ENCODE measurements at regions of chr3 and their contacts with region 1.

Region 1: DNA sequence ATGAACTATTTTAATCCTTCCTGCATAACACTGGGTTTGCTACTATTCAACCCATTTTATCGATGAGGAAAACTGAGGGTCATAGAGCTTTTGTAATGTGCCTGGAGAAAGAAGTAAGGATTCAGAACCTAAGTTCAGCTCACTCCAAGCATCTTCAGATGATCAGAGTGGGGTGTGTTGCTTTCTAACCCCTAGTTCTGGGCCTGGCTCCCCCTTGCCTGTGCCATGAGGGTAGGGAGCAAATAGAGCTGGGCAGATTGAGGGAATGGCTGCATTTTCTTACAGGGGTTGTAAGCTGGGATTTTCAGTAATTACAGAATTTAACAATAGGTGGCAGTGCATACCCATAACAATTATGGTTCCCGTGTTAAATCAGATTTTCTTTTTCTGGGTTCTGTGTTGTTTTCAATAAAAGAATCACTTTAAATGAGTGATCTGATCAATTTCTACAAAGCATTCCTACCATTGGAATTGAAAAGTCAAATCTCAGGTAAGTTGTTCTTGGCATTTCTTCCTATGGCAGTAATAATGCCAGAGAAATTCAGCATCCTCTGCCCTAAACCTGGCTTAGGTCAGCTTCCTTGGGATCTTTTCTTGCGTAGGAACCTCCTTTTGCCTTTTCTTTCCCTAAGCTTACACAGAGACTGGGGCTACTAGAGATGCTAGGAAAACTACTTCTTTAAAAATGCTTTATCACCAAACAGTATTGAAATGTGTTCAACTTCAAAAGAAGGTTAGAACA is 103.8 kb upstream of the IL12A start:
- DNase-seq: no peak
- H3K4me3 ChIP-seq: no peak overlapping the region
- CTCF ChIP-seq: peak; percentile 31

Region 2: GRCh38 chr3:159739886-159740453 is 144.9 kb before region 1 on chr3:
- CTCF ChIA-PET with region 1: no interaction called
- POLR2A ChIA-PET with region 1: no interaction called
- DNase-seq: no peak
- H3K4me3 ChIP-seq: no peak overlapping the region
- CTCF ChIP-seq: no peak

Region 3: DNA sequence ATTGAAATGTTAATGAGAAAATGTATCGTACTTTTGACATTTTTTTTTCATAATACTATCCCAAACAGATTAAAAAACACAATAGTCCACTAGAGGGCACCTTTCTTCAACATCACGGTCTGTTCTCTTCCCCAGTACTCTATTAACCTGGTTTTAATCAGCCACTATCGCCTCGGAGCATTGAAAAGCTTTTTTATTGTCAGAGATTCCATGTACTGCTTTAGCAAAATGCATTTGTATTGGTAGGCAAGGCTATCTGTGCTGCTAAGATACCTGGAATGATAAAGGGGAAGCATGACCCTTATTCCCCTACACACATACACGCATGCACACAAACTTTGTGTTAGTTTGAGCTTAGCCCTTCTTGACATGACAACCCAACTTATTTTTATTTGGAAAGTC is 56.3 kb before region 1 on chr3:
- CTCF ChIA-PET with region 1: interaction called, 63 read pairs
- POLR2A ChIA-PET with region 1: no interaction called
- DNase-seq: no peak
- H3K4me3 ChIP-seq: no peak overlapping the region
- CTCF ChIP-seq: peak; percentile 33

Region 4: DNA sequence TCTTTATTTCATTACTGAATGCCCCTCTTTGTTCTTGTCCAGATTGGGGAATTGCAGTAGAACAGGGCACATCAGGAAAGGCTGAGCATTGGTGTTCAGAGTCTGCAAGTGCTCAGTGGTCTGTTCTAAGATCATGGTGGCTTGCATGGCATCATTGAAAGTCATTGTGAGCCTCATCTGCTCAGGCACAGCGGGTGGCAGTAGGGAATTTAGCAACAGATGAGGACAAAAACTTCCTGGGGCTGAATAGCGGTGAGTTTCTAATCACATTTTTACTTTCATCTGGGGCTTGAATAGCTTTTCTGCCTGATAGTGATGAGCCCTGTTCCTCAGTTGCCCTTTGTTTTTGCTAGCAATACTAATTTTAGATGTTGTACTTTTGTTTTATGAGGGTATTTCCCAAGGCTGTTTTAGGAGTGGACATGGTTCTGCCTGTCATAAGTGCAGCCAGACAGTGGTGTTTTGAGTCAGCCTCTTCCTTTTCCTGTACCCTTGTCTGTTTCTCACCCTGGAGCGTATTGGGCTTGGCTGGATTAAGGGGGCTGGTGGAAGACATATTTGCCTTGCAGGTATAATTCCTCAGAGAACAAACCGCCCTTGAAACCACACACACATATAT is 23.4 kb before region 1 on chr3:
- CTCF ChIA-PET with region 1: interaction called, 11 read pairs
- POLR2A ChIA-PET with region 1: no interaction called
- DNase-seq: no peak
- H3K4me3 ChIP-seq: no peak overlapping the region
- CTCF ChIP-seq: no peak

Region 5: GRCh38 chr3:159910991-159911663 is 26.3 kb after region 1 on chr3:
- CTCF ChIA-PET with region 1: interaction called, 15 read pairs
- POLR2A ChIA-PET with region 1: no interaction called
- DNase-seq: no peak
- H3K4me3 ChIP-seq: no peak overlapping the region
- CTCF ChIP-seq: no peak

Region 6: DNA sequence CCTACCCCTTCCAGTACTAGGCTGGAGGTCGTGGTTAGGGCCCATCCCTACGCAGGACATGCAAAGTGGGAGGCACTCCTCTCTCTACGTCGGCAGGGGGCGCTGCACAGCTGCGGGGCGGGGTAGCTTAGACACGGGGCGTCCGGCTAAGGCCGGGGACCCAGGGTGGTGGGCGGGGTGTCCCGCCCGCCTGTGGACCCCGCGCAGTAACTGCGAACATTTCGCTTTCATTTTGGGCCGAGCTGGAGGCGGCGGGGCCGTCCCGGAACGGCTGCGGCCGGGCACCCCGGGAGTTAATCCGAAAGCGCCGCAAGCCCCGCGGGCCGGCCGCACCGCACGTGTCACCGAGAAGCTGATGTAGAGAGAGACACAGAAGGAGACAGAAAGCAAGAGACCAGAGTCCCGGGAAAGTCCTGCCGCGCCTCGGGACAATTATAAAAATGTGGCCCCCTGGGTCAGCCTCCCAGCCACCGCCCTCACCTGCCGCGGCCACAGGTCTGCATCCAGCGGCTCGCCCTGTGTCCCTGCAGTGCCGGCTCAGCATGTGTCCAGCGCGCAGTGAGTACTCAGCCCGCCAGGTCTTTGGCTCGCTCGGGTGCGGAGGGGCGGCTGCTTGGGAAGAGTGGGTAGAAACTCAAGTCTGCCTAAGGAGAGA is 103.9 kb after region 1 on chr3 and contains the start of gene IL12A:
- CTCF ChIA-PET with region 1: interaction called, 158 read pairs
- POLR2A ChIA-PET with region 1: interaction called, 5 read pairs
- DNase-seq: no peak
- H3K4me3 ChIP-seq: peak within 1 kb of the TSS; percentile 66
- CTCF ChIP-seq: peak; percentile 98

Region 7: GRCh38 chr3:160027541-160028195 is 142.8 kb after region 1 on chr3:
- CTCF ChIA-PET with region 1: interaction called, 22 read pairs
- POLR2A ChIA-PET with region 1: no interaction called
- DNase-seq: peak; percentile 26
- H3K4me3 ChIP-seq: no peak overlapping the region
- CTCF ChIP-seq: no peak